Prostate gland (tissue), 2 donors: ENCODE measurements at regions of chr1 and their contacts with region 1.

Region 1: DNA sequence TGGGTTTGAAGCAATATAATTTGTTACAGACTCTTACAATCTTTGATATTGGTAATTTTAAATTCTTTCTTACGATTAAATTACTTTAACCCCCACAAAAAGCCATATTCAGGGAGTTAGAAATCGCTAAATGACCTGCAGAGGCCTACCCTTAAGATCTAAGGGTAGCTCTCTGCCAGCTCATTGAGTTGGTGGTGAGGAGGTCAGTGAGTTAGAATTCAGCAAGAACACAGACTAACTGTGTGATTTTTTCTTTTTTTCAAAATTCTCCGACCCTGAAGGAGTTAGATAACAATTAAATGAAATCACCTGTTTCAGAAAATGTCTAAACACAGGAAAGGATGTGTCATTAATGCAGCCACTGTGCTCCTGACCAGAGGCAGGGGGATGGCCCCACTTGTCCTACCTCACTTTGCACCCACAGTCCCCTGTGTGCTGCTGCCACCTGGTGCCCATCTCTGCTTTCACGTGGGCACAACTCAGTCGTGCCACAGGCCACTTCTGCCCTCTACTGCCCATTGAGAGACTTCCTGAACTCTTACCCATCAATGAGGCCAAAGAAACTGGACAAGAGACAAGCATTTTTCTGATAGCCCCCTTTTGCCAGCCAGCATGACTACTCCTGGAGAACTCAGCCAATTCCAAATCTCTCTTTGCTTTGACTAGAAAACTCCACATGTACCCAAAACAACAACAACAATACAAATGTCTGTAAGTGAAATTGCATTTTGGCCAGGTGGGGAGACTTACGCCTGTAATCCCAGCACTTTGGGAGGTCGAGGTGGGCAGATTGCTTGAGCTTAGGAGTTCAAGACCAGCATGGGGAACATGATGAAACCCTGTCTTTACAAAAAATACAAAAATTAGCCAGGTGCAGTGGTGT is 8.4 kb downstream of the CFAP45 start:
- DNase-seq: peak; percentile 80
- H3K4me3 ChIP-seq: no peak overlapping the region
- H3K27ac ChIP-seq: no peak overlapping the region
- H3K4me1 ChIP-seq: no peaks in the 10 kb centered on the region
- H3K27me3 ChIP-seq: no peaks in the 10 kb centered on the region
- CTCF ChIP-seq: peak; percentile 84 to 100 (median 94)
- POLR2A ChIP-seq: no peak

Region 2: GRCh38 chr1:159780583-159781582 is 110.6 kb before region 1 on chr1 and contains the start of gene DUSP23:
- intact Hi-C with region 1: loop called (anchors 2 kb)
- DNase-seq: peak; percentile 98
- H3K4me3 ChIP-seq: peak within 1 kb of the TSS; percentile 53 to 83
- H3K27ac ChIP-seq: peak within 1 kb of the TSS; percentile 48 to 74
- H3K4me1 ChIP-seq: no peaks in the 10 kb centered on the region
- H3K27me3 ChIP-seq: no peaks in the 10 kb centered on the region
- CTCF ChIP-seq: peak; percentile 87 to 99 (median 95)
- POLR2A ChIP-seq: peak; percentile 79
- total RNA-seq, gene DUSP23: 79.3 to 85.0 TPM

Region 3: DNA sequence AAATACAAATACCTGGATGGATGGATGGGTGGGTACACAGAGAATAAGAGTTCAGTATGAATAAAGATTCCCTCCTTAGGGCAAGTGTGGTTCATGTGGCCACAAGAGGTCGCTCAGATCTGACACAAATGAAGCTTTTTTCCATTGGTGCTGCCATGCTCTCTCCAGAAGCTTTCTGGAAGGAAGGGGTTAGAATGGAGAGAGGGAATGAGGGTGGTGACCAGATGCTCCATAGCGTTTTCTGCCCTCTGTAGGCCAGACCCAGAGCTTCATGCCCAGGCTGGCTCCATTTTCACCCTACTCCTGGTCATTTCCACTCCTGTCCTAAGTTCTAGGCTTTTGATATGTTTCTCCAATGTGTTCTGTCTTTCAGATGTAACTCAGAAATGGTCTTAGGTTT is 92.6 kb before region 1 on chr1:
- intact Hi-C with region 1: loop called (anchors 1 kb)
- DNase-seq: peak; percentile 60
- H3K4me3 ChIP-seq: no peak overlapping the region
- H3K27ac ChIP-seq: no peak overlapping the region
- H3K4me1 ChIP-seq: no peaks in the 10 kb centered on the region
- H3K27me3 ChIP-seq: no peaks in the 10 kb centered on the region
- CTCF ChIP-seq: peak; percentile 29 to 79 (median 70)
- POLR2A ChIP-seq: no peak

Region 4: GRCh38 chr1:159911326-159912070 is 20.0 kb after region 1 on chr1:
- intact Hi-C with region 1: no loop called
- DNase-seq: no peak
- H3K4me3 ChIP-seq: no peak overlapping the region
- H3K27ac ChIP-seq: no peak overlapping the region
- H3K4me1 ChIP-seq: no peaks in the 10 kb centered on the region
- H3K27me3 ChIP-seq: no peaks in the 10 kb centered on the region
- CTCF ChIP-seq: no peak
- POLR2A ChIP-seq: no peak